H1 (cell line): ENCODE measurements at regions of chr1 and their contacts with region 1.

Region 1: DNA sequence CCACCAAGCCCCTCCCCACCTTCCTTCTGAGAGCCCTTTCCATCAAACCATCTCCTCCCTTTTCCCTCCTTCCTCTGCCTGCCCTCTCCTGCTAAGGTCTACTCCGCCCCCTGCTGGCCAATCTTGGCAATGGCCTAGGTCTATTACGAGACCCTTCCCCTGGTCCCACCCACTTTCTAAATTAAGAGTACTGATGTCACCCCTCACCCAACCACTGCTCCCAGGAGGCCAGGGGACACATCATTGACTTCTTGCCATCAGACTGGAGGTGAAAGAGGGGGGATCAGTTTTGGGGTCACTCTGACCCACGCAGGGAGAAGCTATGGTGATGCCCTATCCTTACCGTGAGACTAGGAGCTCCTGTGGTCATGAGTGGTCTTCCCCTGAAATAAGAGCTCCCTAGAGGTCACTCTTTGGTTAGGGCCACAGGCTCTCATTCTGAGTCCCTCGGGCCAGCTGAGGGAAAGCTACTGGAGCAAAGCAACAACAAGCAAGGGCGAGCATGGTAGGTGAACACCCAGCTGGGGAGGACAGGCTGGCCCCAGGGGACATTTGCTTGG is 34.6 kb upstream of the S100A7 start:
- DNase-seq: peak; percentile 82 to 100
- H3K4me3 ChIP-seq: no peak overlapping the region
- H3K27ac ChIP-seq: 0 out of 2 replicates have a peak overlapping the region, but pooled peaks have one; percentile 38
- H3K4me1 ChIP-seq: peaks cover 0 to 6% (median 2%) of the 10 kb centered on the region in 4 experiments; a peak in 4 of 7 replicates
- H3K27me3 ChIP-seq: no peaks in the 10 kb centered on the region
- CTCF ChIP-seq: peak; percentile 80 to 94 (median 92)
- EP300 ChIP-seq: peak in 1 of 2 experiments; percentile 66; a peak in 2 of 3 replicates
- POLR2A ChIP-seq: no peak
- RAD21 ChIP-seq: peak; percentile 88 to 97

Region 2: GRCh38 chr1:153404768-153405167 is 90.3 kb before region 1 on chr1:
- CTCF ChIA-PET with region 1: interaction called, 21 read pairs
- POLR2A ChIA-PET with region 1: interaction called, 3 read pairs
- DNase-seq: peak; percentile 19 to 86
- H3K4me3 ChIP-seq: no peak overlapping the region
- H3K27ac ChIP-seq: no peak overlapping the region
- H3K4me1 ChIP-seq: no peaks in the 10 kb centered on the region; a peak in 1 of 7 replicates
- H3K27me3 ChIP-seq: peaks cover 0 to 11% (median 8%) of the 10 kb centered on the region in 4 experiments; a peak in 6 of 7 replicates
- CTCF ChIP-seq: peak; percentile 81 to 90 (median 84)
- EP300 ChIP-seq: no peak
- POLR2A ChIP-seq: no peak
- RAD21 ChIP-seq: peak; percentile 31 to 59

Region 3: GRCh38 chr1:153456396-153456795 is 38.7 kb before region 1 on chr1:
- CTCF ChIA-PET with region 1: interaction called, 18 read pairs
- POLR2A ChIA-PET with region 1: no interaction called
- DNase-seq: no peak
- H3K4me3 ChIP-seq: no peak overlapping the region
- H3K27ac ChIP-seq: no peak overlapping the region
- H3K4me1 ChIP-seq: no peaks in the 10 kb centered on the region
- H3K27me3 ChIP-seq: no peaks in the 10 kb centered on the region
- CTCF ChIP-seq: no peak
- EP300 ChIP-seq: no peak
- POLR2A ChIP-seq: no peak
- RAD21 ChIP-seq: no peak

Region 4: GRCh38 chr1:153478692-153479618 is 16.1 kb before region 1 on chr1:
- CTCF ChIA-PET with region 1: interaction called, 50 read pairs
- POLR2A ChIA-PET with region 1: no interaction called
- DNase-seq: no peak
- H3K4me3 ChIP-seq: no peak overlapping the region
- H3K27ac ChIP-seq: no peak overlapping the region
- H3K4me1 ChIP-seq: peaks cover 0 to 11% (median 0%) of the 10 kb centered on the region in 4 experiments; a peak in 2 of 7 replicates
- H3K27me3 ChIP-seq: no peaks in the 10 kb centered on the region
- CTCF ChIP-seq: no peak
- EP300 ChIP-seq: no peak
- POLR2A ChIP-seq: no peak
- RAD21 ChIP-seq: no peak